Ovary (tissue), 10 donors: ENCODE measurements at regions of chr4 and their contacts with region 1.

Region 1: GRCh38 chr4:176789955-176790354 is 2.8 kb downstream of the VEGFC start:
- DNase-seq: no peak
- H3K4me3 ChIP-seq: no peak overlapping the region
- H3K27ac ChIP-seq: no peak overlapping the region
- H3K4me1 ChIP-seq: peaks cover 3% of the 10 kb centered on the region
- H3K27me3 ChIP-seq: no peaks in the 10 kb centered on the region
- CTCF ChIP-seq: peak in 1 of 3 donors; percentile 30
- EP300 ChIP-seq: no peak
- POLR2A ChIP-seq: no peak

Region 2: GRCh38 chr4:176563591-176563990 is 226.4 kb before region 1 on chr4:
- intact Hi-C with region 1: loop called in 2 of 4 experiments (anchors 10 kb)
- DNase-seq: no peak
- H3K4me3 ChIP-seq: no peak overlapping the region
- H3K27ac ChIP-seq: no peak overlapping the region
- H3K4me1 ChIP-seq: no peaks in the 10 kb centered on the region
- H3K27me3 ChIP-seq: no peaks in the 10 kb centered on the region
- CTCF ChIP-seq: no peak
- EP300 ChIP-seq: no peak
- POLR2A ChIP-seq: no peak

Region 3: DNA sequence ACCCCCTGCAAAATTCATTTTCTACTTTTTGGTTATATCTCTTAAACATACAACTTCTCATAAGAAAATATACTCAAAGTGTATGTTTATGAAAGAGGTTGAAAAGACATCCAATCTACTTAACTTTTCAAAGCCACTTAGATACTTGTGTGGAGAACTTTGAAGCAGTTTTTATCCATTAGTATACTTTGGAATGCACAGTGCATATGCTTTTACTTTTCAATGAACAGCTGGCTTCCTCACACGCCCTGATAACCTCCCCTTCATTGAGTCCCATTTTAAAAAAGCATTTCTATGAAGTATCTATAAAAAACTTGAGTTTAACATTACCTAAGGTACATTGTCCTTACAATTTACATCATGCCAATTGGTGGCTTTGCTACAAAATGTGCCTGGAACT is 71.1 kb before region 1 on chr4:
- intact Hi-C with region 1: no loop called
- DNase-seq: no peak
- H3K4me3 ChIP-seq: no peak overlapping the region
- H3K27ac ChIP-seq: no peak overlapping the region
- H3K4me1 ChIP-seq: no peaks in the 10 kb centered on the region
- H3K27me3 ChIP-seq: no peaks in the 10 kb centered on the region
- CTCF ChIP-seq: no peak
- EP300 ChIP-seq: no peak
- POLR2A ChIP-seq: no peak

Region 4: DNA sequence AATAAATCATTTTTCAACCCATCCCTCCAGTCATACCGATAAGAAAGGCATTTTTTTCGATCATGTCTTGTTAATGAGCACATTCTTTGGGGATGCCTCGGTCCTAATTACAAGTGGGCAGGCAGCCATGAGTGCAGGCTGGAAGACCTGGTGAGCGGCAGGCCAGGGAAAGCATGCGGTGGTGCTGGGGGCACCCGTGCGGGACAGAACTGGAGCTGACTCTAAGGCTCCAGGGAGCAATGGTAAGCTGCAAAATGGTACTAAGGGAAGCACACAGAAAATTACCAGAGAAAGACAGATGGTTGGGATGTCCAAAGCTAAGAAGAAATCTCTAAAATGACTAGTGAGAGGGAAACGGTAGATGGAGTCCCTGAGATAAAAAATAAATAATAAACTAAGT is 1063.3 kb after region 1 on chr4:
- intact Hi-C with region 1: no loop called
- DNase-seq: no peak
- H3K4me3 ChIP-seq: no peak overlapping the region
- H3K27ac ChIP-seq: no peak overlapping the region
- H3K4me1 ChIP-seq: no peaks in the 10 kb centered on the region
- H3K27me3 ChIP-seq: no peaks in the 10 kb centered on the region
- CTCF ChIP-seq: no peak
- EP300 ChIP-seq: no peak
- POLR2A ChIP-seq: no peak